Activated naive CD4-positive, alpha-beta T cell treated with anti-CD3 and anti-CD28 coated beads, Interleukin-2, amount 10 ng/mL, durations not matched to agents 7 days and 5 days (primary cell): ENCODE measurements at regions of chr12 and their contacts with region 1.

Region 1: GRCh38 chr12:106386813-106387535 is 29.4 kb downstream of the POLR3B start:
- DNase-seq: no peak
- H3K4me3 Mint-ChIP-seq: no peak overlapping the region
- H3K27ac Mint-ChIP-seq: no peak overlapping the region
- H3K4me1 Mint-ChIP-seq: no peaks in the 10 kb centered on the region
- H3K27me3 Mint-ChIP-seq: no peaks in the 10 kb centered on the region

Region 2: GRCh38 chr12:106246891-106247673 is 139.9 kb before region 1 on chr12:
- CTCF ChIA-PET with region 1: no interaction called
- DNase-seq: peak; percentile 76
- H3K4me3 Mint-ChIP-seq: peak overlapping the region; percentile 73
- H3K27ac Mint-ChIP-seq: no peak overlapping the region
- H3K4me1 Mint-ChIP-seq: peaks cover 15% of the 10 kb centered on the region
- H3K27me3 Mint-ChIP-seq: peaks cover 17% of the 10 kb centered on the region

Region 3: GRCh38 chr12:106288494-106289195 is 98.3 kb before region 1 on chr12:
- CTCF ChIA-PET with region 1: no interaction called
- DNase-seq: no peak
- H3K4me3 Mint-ChIP-seq: no peak overlapping the region
- H3K27ac Mint-ChIP-seq: no peak overlapping the region
- H3K4me1 Mint-ChIP-seq: peaks cover 8% of the 10 kb centered on the region
- H3K27me3 Mint-ChIP-seq: peaks cover 6% of the 10 kb centered on the region

Region 4: DNA sequence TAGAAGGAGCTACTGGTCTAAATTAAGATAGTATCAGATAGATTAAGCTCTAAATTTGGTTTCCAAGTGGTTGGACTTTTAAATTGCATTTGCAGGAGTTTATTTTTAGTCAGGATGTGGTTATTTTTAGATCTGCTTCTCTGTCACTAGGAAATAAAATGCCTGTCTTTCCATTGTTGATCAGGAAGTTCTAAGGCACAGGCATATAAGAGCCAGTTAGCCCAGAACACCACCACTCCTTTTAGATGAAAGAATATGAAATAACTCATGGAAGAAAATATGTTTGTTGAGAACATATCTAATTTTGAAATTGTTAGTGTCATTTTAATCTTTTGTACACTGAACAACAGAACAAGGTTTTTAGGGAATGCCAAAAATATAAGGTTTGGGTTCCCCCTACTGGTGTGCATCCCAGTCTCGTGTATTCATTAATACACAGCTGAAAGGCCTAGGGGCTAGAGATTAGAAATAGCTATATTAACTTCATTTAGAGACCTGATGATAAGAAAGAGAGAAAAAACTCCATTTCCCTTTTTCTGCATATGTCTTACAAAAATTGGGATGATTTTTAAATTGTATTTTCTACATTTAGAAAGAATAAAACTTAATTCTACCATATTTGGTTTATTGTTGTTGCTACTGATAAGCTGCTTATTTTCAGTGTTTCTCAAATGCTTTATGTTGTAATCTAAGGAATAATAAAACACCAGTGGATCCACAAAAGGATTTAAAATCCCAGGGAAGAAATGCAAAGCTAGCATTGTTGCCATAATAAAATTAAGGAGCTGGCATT is 454.7 kb after region 1 on chr12:
- CTCF ChIA-PET with region 1: interaction called, 14 read pairs
- DNase-seq: peak; percentile 44
- H3K4me3 Mint-ChIP-seq: no peak overlapping the region
- H3K27ac Mint-ChIP-seq: no peak overlapping the region
- H3K4me1 Mint-ChIP-seq: peaks cover 7% of the 10 kb centered on the region
- H3K27me3 Mint-ChIP-seq: no peaks in the 10 kb centered on the region